Naive thymus-derived CD4-positive, alpha-beta T cell (primary cell): ENCODE measurements at regions of chr2 and their contacts with region 1.

Region 1: GRCh38 chr2:118240276-118240675 is 152.0 kb downstream of the INSIG2 start:
- DNase-seq: no peak
- ATAC-seq: no peak
- H3K4me3 ChIP-seq: no peak overlapping the region
- H3K4me3 Mint-ChIP-seq: no peak overlapping the region
- H3K27ac ChIP-seq: no peak overlapping the region
- H3K27ac Mint-ChIP-seq: no peak overlapping the region
- H3K4me1 ChIP-seq: no peaks in the 10 kb centered on the region
- H3K4me1 Mint-ChIP-seq: no peaks in the 10 kb centered on the region
- H3K27me3 ChIP-seq: no peaks in the 10 kb centered on the region
- H3K27me3 Mint-ChIP-seq: peaks cover 4 to 50% (median 41%) of the 10 kb centered on the region in 5 donors

Region 2: GRCh38 chr2:118279005-118279404 is 38.7 kb after region 1 on chr2:
- CTCF ChIA-PET with region 1: no interaction called
- POLR2A ChIA-PET with region 1: no interaction called
- intact Hi-C with region 1: loop called in 1 of 2 experiments (anchors 1 kb)
- DNase-seq: no peak
- ATAC-seq: no peak
- H3K4me3 ChIP-seq: no peak overlapping the region
- H3K4me3 Mint-ChIP-seq: no peak overlapping the region
- H3K27ac ChIP-seq: no peak overlapping the region
- H3K27ac Mint-ChIP-seq: no peak overlapping the region
- H3K4me1 ChIP-seq: no peaks in the 10 kb centered on the region
- H3K4me1 Mint-ChIP-seq: no peaks in the 10 kb centered on the region
- H3K27me3 ChIP-seq: no peaks in the 10 kb centered on the region
- H3K27me3 Mint-ChIP-seq: peaks cover 8 to 29% (median 24%) of the 10 kb centered on the region in 5 donors